Activated T-helper 2 cell treated with anti-CD3 and anti-CD28 coated beads, Interferon-gamma antibody, Interleukin-2, Interleukin-4, amounts not matched to agents 10 μg/mL and 5 μg/mL and 100 μg/mL, durations not matched to agents 14 hours and 24 hours and 36 hours (primary cell): ENCODE measurements at regions of chr13 and their contacts with region 1.

Region 1: DNA sequence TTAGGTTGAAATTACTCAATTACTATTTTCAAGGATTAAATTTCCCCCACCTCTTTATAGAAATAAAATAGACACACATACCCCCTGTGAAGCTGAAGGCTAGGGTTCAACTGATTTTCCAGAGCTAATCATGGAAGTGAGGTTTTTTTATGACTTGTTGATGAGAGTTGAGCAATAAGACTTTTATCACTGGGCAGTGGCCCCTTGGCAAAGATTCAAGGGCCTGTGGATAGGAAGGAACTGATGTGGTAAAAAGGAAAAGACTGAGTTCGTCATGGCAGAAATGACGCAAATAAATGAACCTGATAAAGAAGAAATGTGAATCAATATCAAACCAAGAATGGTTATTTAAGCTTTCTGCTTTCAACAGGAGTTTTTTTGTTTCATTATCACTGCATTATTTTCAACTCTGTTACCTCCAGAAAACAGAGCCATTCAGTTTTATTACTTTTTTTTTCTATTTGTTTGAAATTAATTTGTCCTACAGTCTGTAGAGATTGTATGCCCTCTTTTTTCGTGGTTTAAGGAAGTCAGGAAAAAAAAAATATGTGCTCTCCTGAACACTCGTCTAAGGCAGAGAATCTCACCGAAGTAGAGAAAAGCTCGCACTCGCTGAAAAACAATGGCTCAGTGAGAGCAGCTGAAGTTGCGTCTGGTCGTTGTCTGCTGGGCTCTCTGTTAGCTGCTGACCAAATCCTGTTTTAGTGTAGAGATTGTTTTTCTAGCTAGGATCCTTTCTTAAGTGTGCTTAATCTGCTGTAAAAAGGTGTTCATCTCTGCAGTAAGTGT is 38.9 kb downstream of the STOML3 start:
- DNase-seq: no peak
- H3K4me3 Mint-ChIP-seq: no peak overlapping the region
- H3K27ac Mint-ChIP-seq: peak overlapping the region; percentile 38
- H3K4me1 Mint-ChIP-seq: peaks cover 7% of the 10 kb centered on the region
- H3K27me3 Mint-ChIP-seq: no peaks in the 10 kb centered on the region

Region 2: GRCh38 chr13:38850868-38851626 is 100.7 kb before region 1 on chr13:
- intact Hi-C with region 1: no loop called
- DNase-seq: no peak
- H3K4me3 Mint-ChIP-seq: no peak overlapping the region
- H3K27ac Mint-ChIP-seq: no peak overlapping the region
- H3K4me1 Mint-ChIP-seq: no peaks in the 10 kb centered on the region
- H3K27me3 Mint-ChIP-seq: no peaks in the 10 kb centered on the region

Region 3: GRCh38 chr13:38883783-38884182 is 67.9 kb before region 1 on chr13:
- intact Hi-C with region 1: loop called (anchors 2 kb)
- DNase-seq: no peak
- H3K4me3 Mint-ChIP-seq: no peak overlapping the region
- H3K27ac Mint-ChIP-seq: no peak overlapping the region
- H3K4me1 Mint-ChIP-seq: peaks cover 5% of the 10 kb centered on the region
- H3K27me3 Mint-ChIP-seq: peaks cover 2% of the 10 kb centered on the region

Region 4: DNA sequence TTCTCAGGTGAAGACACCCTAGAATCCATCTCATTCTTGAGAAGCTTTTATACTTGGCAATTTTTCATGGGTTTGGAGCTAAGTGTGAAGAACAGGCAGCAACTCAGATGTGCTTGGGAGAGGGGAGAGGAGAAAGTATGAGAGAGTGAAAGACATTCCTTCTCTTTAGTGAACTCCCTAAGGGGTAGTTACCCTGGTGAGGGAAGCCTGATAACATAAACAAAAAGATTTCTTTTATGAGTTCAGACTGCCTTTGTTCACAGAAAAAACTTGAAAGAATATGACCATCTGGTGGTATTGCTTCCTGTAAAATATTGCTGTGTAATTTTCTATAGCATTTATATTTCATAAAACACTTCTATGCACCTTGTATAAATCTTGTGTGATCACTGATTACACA is 39.0 kb after region 1 on chr13 and contains the start of gene STOML3:
- intact Hi-C with region 1: loop called (anchors 5 kb)
- DNase-seq: no peak
- H3K4me3 Mint-ChIP-seq: no peak within 1 kb of the TSS
- H3K27ac Mint-ChIP-seq: no peak within 1 kb of the TSS
- H3K4me1 Mint-ChIP-seq: no peaks in the 10 kb centered on the region
- H3K27me3 Mint-ChIP-seq: peaks cover 4% of the 10 kb centered on the region
- total RNA-seq, gene STOML3: not detected in 2 replicates

Region 5: DNA sequence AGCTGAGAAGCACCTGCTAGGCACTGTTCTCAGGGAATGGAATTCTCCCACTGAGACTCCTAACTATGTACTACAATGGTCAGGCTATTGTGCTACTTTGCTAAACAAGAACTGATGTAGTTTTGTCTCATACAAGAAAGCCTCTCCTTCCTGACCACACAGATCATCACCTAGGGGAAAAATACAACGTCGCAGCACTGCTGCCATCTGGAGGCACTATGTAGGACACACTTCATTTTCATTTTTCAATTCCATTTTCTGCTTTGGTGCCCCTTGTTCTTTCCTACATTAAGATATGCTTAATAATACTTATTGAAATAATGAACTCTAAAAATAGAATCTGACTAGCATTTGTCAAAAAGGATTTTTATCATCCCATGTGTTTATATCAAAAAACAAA is 65.1 kb after region 1 on chr13:
- intact Hi-C with region 1: loop called (anchors 2 kb)
- DNase-seq: no peak
- H3K4me3 Mint-ChIP-seq: no peak overlapping the region
- H3K27ac Mint-ChIP-seq: peak overlapping the region; percentile 28
- H3K4me1 Mint-ChIP-seq: peaks cover 15% of the 10 kb centered on the region
- H3K27me3 Mint-ChIP-seq: no peaks in the 10 kb centered on the region